ENCODE measurements at regions of chr22 and their contacts with region 1.

Region 1: GRCh38 chr22:19832476-19833108 is 22.1 kb downstream of the GNB1L start:
- DNase-seq: no peak
- H3K4me3 ChIP-seq: no peak overlapping the region
- H3K27ac ChIP-seq: no peak overlapping the region
- H3K4me1 ChIP-seq: no peaks in the 10 kb centered on the region
- H3K27me3 ChIP-seq: no peaks in the 10 kb centered on the region
- CTCF ChIP-seq: no peak

Region 2: DNA sequence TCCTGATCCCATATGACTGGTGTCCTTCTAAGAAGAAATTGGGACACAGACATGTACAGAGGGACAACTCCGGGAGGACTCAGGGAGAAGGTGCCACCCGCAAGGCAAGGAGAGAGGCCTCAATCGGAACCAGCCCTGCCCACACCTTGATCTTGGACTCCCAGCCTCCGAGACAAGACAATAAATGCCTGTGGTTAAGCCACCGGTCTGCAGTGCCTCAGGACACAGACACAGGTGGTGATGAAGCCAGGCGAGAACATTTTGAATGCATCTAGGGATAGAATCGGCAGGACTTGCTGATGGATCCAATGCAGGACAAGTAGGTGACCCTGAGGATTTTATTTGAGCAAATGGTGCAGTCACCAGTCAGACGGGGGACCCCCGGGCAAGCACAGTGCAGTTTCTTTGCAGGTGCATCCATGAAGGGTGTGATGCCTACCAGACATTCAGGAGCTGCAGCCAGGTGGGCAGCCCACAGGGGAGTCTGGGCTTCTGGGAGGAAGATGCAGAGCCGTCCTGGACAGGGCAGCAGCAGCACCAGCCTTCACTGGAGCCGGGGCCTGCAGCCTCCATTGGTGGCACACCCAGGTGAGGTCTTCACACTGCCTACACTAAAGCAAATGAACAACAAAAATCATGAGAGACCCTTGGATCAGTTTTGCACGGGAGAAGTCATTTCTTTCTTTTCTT is 138.5 kb before region 1 on chr22:
- CTCF ChIA-PET with region 1: no interaction called
- dilution Hi-C with region 1: no loop called
- in situ Hi-C with region 1: no loop called
- intact Hi-C with region 1: no loop called
- DNase-seq: peak; percentile 29
- H3K4me3 ChIP-seq: no peak overlapping the region
- H3K27ac ChIP-seq: no peak overlapping the region
- H3K4me1 ChIP-seq: peaks cover 18% of the 10 kb centered on the region
- H3K27me3 ChIP-seq: no peaks in the 10 kb centered on the region
- CTCF ChIP-seq: no peak

Region 3: DNA sequence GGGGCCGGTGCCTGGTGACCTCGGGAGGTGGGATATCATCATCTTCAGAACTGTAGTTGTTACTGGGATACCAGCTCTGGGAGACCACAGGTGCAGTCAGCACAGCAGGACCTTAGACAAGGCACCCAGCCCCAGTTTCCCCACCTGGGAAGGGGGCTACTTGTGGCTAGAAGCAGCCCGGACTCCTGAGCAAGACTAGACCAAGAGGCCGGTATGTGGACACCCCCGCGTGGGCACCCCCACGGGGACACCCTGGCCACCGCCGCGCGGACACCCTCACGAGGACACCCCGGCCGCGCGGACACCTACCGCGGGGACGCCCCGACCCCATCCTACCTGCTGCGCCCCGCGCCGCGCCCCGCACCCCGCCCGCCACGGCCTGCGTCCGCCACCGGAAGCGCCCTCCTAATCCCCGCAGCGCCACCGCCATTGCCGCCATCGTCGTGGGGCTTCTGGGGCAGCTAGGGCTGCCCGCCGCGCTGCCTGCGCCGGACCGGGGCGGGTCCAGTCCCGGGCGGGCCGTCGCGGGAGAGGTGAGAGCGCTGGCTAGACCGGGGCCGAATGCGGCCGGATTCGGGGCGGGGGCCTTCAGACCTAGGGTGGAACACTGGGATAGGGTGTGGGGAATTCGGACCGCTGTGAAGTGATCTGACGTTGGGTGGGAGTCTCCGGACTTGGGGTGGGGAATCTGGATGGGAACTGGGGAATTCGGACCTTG is 108.9 kb after region 1 on chr22 and contains the starts of genes COMT and TXNRD2:
- CTCF ChIA-PET with region 1: no interaction called
- dilution Hi-C with region 1: loop called (anchors 5 kb)
- in situ Hi-C with region 1: no loop called
- intact Hi-C with region 1: no loop called
- DNase-seq: peak; percentile 54
- H3K4me3 ChIP-seq: peak within 1 kb of the TSS; percentile 64 to 71 (median 70)
- H3K27ac ChIP-seq: peak within 1 kb of the TSS; percentile 80
- H3K4me1 ChIP-seq: peaks cover 28% of the 10 kb centered on the region
- H3K27me3 ChIP-seq: no peaks in the 10 kb centered on the region
- CTCF ChIP-seq: no peak
- total RNA-seq, gene COMT: 180 to 193 TPM
- total RNA-seq, gene TXNRD2: 13.2 to 22.1 TPM

Region 4: GRCh38 chr22:20020533-20021195 is 188.1 kb after region 1 on chr22 and contains the start of gene TANGO2:
- CTCF ChIA-PET with region 1: no interaction called
- dilution Hi-C with region 1: loop called (anchors 5 kb)
- in situ Hi-C with region 1: no loop called
- intact Hi-C with region 1: no loop called
- DNase-seq: peak; percentile 89
- H3K4me3 ChIP-seq: peak within 1 kb of the TSS; percentile 82 to 90 (median 85)
- H3K27ac ChIP-seq: peak within 1 kb of the TSS; percentile 33
- H3K4me1 ChIP-seq: peaks cover 23% of the 10 kb centered on the region
- H3K27me3 ChIP-seq: no peaks in the 10 kb centered on the region
- CTCF ChIP-seq: no peak
- total RNA-seq, gene TANGO2: 22.5 to 45.7 TPM

Measured in mammary epithelial cell (primary cell).